HCT116 (cell line): ENCODE measurements at regions of chr5 and their contacts with region 1.

Region 1: DNA sequence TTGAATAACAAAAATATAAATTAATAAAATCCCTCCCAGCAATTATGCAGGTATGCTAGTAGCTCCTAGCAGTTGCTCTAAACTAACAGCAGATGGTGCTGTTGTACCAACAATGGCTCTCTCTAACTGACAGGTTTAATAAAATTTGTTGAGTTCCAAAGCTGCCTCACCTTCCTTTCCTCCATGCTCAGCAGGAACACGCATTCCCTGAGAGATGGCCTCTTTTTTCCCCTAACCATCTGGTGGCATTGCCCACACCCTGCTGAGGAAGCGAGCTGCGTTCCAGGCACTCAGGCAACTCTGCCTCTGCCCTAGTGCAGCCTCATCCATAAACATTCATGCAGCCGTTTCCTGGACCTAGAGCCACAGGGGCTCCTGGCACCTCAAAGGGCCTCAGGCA is 106.2 kb downstream of the KLHL3 start:
- DNase-seq: peak; percentile 51
- ATAC-seq: peak; percentile 95
- H3K4me3 ChIP-seq: no peak overlapping the region
- H3K27ac ChIP-seq: no peak overlapping the region
- H3K4me1 ChIP-seq: peaks cover 0 to 2% of the 10 kb centered on the region in 2 experiments; a peak in 1 of 4 replicates
- H3K27me3 ChIP-seq: no peaks in the 10 kb centered on the region
- CTCF ChIP-seq: peak; percentile 77 to 87 (median 85)
- POLR2A ChIP-seq: no peak
- RAD21 ChIP-seq: peak; percentile 97

Region 2: DNA sequence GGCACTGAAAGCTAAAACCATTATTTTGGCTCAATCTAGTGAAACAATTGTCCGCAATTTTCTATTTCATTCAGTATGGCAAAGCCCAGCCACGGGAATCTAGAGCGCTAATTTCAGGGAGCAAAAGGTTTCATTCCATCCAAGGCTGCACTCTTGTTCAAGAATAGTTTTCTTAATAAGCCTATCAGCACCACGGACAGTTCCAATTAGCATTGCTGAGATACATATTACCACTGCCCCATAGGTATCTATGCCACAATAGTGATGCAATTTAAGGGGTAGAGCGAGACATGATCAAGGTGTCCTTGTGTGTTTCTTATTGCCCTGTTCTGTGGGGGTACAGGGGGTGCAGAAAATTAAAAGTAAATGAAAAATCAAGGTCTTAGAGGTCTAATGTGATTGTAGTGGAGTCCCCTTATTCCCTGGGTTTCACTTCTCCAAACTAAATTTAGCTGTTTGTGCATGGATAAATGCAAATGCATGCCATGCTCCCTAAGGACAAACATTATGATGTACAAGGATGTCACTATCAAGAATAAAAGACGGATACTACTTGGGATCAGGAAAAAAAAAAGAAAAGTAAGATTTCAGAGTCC is 176.1 kb before region 1 on chr5:
- CTCF ChIA-PET with region 1: no interaction called
- POLR2A ChIA-PET with region 1: no interaction called
- RAD21 ChIA-PET with region 1: no interaction called
- intact Hi-C with region 1: no loop called
- DNase-seq: peak; percentile 12
- ATAC-seq: no peak
- H3K4me3 ChIP-seq: no peak overlapping the region
- H3K27ac ChIP-seq: no peak overlapping the region
- H3K4me1 ChIP-seq: no peaks in the 10 kb centered on the region
- H3K27me3 ChIP-seq: peaks cover 23% of the 10 kb centered on the region
- CTCF ChIP-seq: no peak
- POLR2A ChIP-seq: no peak
- RAD21 ChIP-seq: no peak

Region 3: GRCh38 chr5:137481596-137481995 is 148.1 kb before region 1 on chr5:
- CTCF ChIA-PET with region 1: no interaction called
- POLR2A ChIA-PET with region 1: no interaction called
- RAD21 ChIA-PET with region 1: no interaction called
- intact Hi-C with region 1: no loop called
- DNase-seq: no peak
- ATAC-seq: no peak
- H3K4me3 ChIP-seq: no peak overlapping the region
- H3K27ac ChIP-seq: no peak overlapping the region
- H3K4me1 ChIP-seq: no peaks in the 10 kb centered on the region
- H3K27me3 ChIP-seq: peaks cover 39% of the 10 kb centered on the region
- CTCF ChIP-seq: no peak
- POLR2A ChIP-seq: no peak
- RAD21 ChIP-seq: no peak

Region 4: GRCh38 chr5:137649228-137649935 is 19.7 kb after region 1 on chr5:
- CTCF ChIA-PET with region 1: no interaction called
- POLR2A ChIA-PET with region 1: no interaction called
- RAD21 ChIA-PET with region 1: no interaction called
- intact Hi-C with region 1: no loop called
- DNase-seq: no peak
- ATAC-seq: no peak
- H3K4me3 ChIP-seq: no peak overlapping the region
- H3K27ac ChIP-seq: no peak overlapping the region
- H3K4me1 ChIP-seq: no peaks in the 10 kb centered on the region
- H3K27me3 ChIP-seq: no peaks in the 10 kb centered on the region
- CTCF ChIP-seq: no peak
- POLR2A ChIP-seq: no peak
- RAD21 ChIP-seq: no peak

Region 5: GRCh38 chr5:137743031-137743640 is 113.5 kb after region 1 on chr5:
- CTCF ChIA-PET with region 1: interaction called, 81 read pairs
- POLR2A ChIA-PET with region 1: interaction called, 4 read pairs
- RAD21 ChIA-PET with region 1: interaction called, 20 to 27 read pairs
- intact Hi-C with region 1: loop called (anchors 1 kb)
- DNase-seq: peak; percentile 59
- ATAC-seq: peak; percentile 88
- H3K4me3 ChIP-seq: no peak overlapping the region
- H3K27ac ChIP-seq: no peak overlapping the region
- H3K4me1 ChIP-seq: no peaks in the 10 kb centered on the region
- H3K27me3 ChIP-seq: no peaks in the 10 kb centered on the region
- CTCF ChIP-seq: peak; percentile 61 to 77 (median 68)
- POLR2A ChIP-seq: no peak
- RAD21 ChIP-seq: peak; percentile 65

Region 6: DNA sequence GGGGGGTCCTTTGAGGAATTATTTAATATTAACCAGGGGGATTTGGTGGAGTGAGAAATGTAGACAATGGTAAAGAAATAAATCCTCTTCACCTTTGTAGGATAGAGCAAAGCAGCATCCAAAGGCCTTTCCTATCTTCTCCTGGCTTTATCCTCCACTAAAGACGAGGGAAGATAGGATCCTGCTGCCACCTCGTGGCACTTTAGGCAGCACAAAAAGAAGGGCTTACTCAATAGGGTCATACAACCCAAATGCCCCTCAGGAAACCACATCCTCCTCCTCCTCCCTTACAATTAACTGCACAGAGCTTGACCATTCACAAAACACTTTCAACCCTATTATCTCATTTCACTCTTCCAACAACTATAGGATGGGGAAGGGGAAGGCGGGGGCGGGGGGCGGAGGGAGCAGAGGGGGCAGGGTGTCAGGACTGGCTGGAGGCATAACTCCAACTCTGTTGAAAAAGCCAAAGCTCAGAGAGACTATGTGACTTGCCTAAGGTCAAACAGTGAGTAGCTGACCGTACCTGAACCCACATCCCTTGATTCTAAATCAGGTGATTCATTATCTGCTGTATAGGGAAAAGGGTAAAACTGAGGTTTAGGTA is 192.6 kb after region 1 on chr5:
- CTCF ChIA-PET with region 1: interaction called, 5 read pairs
- POLR2A ChIA-PET with region 1: no interaction called
- RAD21 ChIA-PET with region 1: interaction called in 1 of 2 experiments, 3 read pairs
- intact Hi-C with region 1: loop called (anchors 1 kb)
- DNase-seq: peak; percentile 40
- ATAC-seq: peak; percentile 90
- H3K4me3 ChIP-seq: no peak overlapping the region
- H3K27ac ChIP-seq: no peak overlapping the region
- H3K4me1 ChIP-seq: 0 out of 4 replicates have a peak, but pooled peaks cover 0 to 4% of the 10 kb centered on the region in 2 experiments
- H3K27me3 ChIP-seq: no peaks in the 10 kb centered on the region
- CTCF ChIP-seq: peak; percentile 47 to 66 (median 59); a peak in 5 of 6 replicates
- POLR2A ChIP-seq: no peak
- RAD21 ChIP-seq: peak; percentile 78

Region 7: DNA sequence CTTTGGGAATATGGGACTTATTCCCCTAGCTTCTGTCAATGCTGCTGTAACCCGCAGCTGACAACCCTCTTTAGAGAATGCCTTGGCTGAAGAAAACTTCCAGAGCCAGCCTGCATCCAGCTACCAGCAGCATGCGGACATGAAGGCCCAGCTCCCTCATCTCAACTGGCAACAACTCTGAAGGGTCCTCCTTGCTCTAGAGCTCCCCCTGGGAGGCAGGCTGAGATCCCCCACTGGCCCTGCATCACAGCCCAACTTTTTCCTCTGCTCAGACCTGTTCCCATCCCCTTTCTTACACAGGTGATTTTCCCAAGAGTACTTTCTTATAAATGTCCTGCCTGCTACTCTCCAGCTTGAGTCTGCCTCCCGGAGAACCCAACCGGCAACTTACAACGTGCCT is 435.5 kb after region 1 on chr5:
- CTCF ChIA-PET with region 1: interaction called, 23 read pairs
- POLR2A ChIA-PET with region 1: no interaction called
- RAD21 ChIA-PET with region 1: interaction called in 1 of 2 experiments, 3 read pairs
- intact Hi-C with region 1: loop called (anchors 1 kb)
- DNase-seq: no peak
- ATAC-seq: peak; percentile 74
- H3K4me3 ChIP-seq: no peak overlapping the region
- H3K27ac ChIP-seq: no peak overlapping the region
- H3K4me1 ChIP-seq: no peaks in the 10 kb centered on the region
- H3K27me3 ChIP-seq: no peaks in the 10 kb centered on the region
- CTCF ChIP-seq: peak; percentile 49 to 72 (median 62); a peak in 5 of 6 replicates
- POLR2A ChIP-seq: no peak
- RAD21 ChIP-seq: peak; percentile 32

Region 8: GRCh38 chr5:138077065-138077696 is 447.5 kb after region 1 on chr5:
- CTCF ChIA-PET with region 1: interaction called, 17 read pairs
- POLR2A ChIA-PET with region 1: no interaction called
- RAD21 ChIA-PET with region 1: no interaction called
- intact Hi-C with region 1: no loop called
- DNase-seq: peak; percentile 62
- ATAC-seq: peak; percentile 90
- H3K4me3 ChIP-seq: no peak overlapping the region
- H3K27ac ChIP-seq: no peak overlapping the region
- H3K4me1 ChIP-seq: no peaks in the 10 kb centered on the region
- H3K27me3 ChIP-seq: no peaks in the 10 kb centered on the region
- CTCF ChIP-seq: peak; percentile 79 to 94 (median 86)
- POLR2A ChIP-seq: no peak
- RAD21 ChIP-seq: peak; percentile 96